ENCODE measurements at regions of chr5 and their contacts with region 1.

Region 1: DNA sequence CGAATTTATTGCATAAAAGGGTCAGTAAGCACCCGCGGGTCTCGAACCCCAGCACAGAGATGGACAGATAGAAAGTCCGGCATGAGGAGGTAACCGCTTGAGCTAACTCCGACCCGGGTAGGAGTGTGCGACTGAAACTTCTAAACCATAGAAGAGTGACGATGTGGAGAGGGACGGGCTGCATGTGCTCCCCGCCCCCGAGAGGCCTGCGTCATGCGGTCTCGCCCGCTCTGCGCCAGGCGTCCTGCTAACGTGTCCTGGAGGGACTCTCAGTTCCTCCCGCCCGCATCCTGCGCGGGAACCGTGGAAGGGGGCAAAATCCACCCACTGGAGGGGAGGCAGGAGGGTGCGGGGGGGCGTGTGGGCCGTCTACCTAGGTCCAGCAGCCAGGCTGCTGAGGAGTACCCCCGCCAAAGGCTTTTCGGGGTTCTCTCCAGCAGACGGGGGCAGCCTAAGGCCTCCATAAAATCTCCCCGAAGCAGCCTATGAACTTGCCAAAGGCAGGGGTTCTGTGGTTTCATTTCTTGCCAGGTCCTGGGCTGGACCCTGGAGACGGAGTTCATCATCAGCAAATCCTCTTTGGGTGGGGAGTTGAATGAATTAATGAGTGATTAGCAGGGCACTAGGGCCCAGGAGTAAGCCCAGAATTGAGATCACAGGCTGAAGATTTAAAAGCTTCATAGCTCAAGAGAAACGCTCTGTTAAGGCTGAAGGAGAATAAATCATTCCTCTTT is 51.9 kb downstream of the TGFBI start:
- DNase-seq: peak; percentile 82
- ATAC-seq: peak; percentile 89
- H3K4me3 ChIP-seq: peak overlapping the region; percentile 62; the same call in 1 of the 2 replicates
- H3K27ac ChIP-seq: no peak overlapping the region
- H3K4me1 ChIP-seq: no peaks in the 10 kb centered on the region; the same call in 1 of the 2 replicates
- H3K27me3 ChIP-seq: peaks cover 0 to 2% of the 10 kb centered on the region in 2 experiments; a peak in 2 of 4 replicates
- CTCF ChIP-seq: no peak
- EP300 ChIP-seq: peak in 1 of 2 experiments; percentile 70; a peak in 3 of 4 replicates
- POLR2A ChIP-seq: peak; percentile 60; the same call in 1 of the 2 replicates
- RAD21 ChIP-seq: no peak

Region 2: GRCh38 chr5:135944967-135945560 is 135.6 kb before region 1 on chr5:
- CTCF ChIA-PET with region 1: interaction called, 22 read pairs
- POLR2A ChIA-PET with region 1: no interaction called
- RAD21 ChIA-PET with region 1: interaction called, 3 read pairs
- SMC1A ChIA-PET with region 1: interaction called, 10 read pairs
- in situ Hi-C with region 1: no loop called
- intact Hi-C with region 1: loop called (anchors 1 kb)
- DNase-seq: no peak
- ATAC-seq: peak; percentile 70
- H3K4me3 ChIP-seq: no peak overlapping the region
- H3K27ac ChIP-seq: no peak overlapping the region
- H3K4me1 ChIP-seq: no peaks in the 10 kb centered on the region
- H3K27me3 ChIP-seq: no peaks in the 10 kb centered on the region; a peak in 2 of 4 replicates
- CTCF ChIP-seq: peak; percentile 60 to 77 (median 66)
- EP300 ChIP-seq: no peak
- POLR2A ChIP-seq: no peak
- RAD21 ChIP-seq: peak; percentile 74

Region 3: DNA sequence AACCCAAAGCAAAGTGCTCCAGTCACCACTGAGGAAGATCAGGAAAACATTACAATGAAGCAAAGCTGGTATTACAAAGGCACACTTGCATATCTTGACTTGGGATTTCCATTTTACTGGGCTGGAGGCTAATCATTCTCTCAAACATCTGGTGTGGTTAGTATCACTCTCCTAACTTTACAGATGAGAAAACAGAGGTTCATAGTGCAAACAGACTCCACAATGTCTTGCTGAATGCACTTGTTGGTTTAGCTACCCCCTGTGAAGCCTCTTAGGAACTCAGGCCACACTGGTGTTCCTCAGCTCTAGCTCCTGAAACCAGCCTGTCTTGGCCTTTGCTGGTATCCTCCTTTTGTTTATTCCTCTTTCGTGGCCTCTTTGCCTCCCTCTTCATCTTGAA is 22.5 kb after region 1 on chr5:
- CTCF ChIA-PET with region 1: interaction called, 15 read pairs
- POLR2A ChIA-PET with region 1: interaction called, 3 read pairs
- RAD21 ChIA-PET with region 1: interaction called, 18 read pairs
- SMC1A ChIA-PET with region 1: interaction called, 17 read pairs
- in situ Hi-C with region 1: no loop called
- intact Hi-C with region 1: no loop called
- DNase-seq: no peak
- ATAC-seq: peak; percentile 72
- H3K4me3 ChIP-seq: no peak overlapping the region
- H3K27ac ChIP-seq: no peak overlapping the region
- H3K4me1 ChIP-seq: no peaks in the 10 kb centered on the region
- H3K27me3 ChIP-seq: no peaks in the 10 kb centered on the region
- CTCF ChIP-seq: no peak
- EP300 ChIP-seq: no peak
- POLR2A ChIP-seq: no peak
- RAD21 ChIP-seq: no peak

Region 4: DNA sequence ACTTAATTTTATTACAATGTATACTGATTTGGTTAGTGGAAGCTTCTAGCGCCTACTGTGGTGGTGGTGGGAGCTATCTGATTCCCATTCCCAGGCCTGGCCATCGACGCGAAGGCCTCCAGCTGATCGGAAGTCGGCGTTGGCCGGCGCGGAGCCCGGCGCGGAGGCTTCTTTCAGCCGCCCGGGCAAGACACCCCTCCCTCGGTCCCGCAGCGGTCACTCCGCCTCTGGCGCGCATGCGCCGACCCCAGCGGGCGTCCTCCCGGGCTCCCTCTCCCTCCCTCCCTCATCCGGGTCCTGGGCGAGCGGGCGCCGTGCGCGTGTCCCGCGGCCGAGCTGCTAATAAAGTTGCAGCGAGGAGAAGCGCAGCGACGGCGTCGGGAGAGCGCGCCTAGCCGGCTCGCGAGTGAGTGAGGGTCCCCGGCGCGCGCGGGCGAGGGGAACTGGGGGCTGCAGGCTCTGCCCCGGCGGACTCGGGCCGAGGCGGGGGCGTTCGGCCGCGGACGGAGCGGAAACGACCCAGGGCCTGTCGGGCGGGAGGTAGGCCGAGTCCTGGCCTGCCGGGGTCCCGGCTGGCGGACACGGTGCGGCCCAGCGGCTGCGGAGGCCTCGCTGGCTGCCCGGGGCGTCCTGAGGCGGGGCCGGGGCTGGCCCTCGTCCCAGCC is 52.0 kb after region 1 on chr5 and contains the start of gene SMAD5:
- CTCF ChIA-PET with region 1: interaction called, 8 read pairs
- POLR2A ChIA-PET with region 1: interaction called, 8 read pairs
- RAD21 ChIA-PET with region 1: interaction called, 19 read pairs
- SMC1A ChIA-PET with region 1: interaction called, 29 read pairs
- in situ Hi-C with region 1: no loop called
- intact Hi-C with region 1: loop called (anchors 5 kb)
- DNase-seq: peak; percentile 65
- ATAC-seq: peak; percentile 95
- H3K4me3 ChIP-seq: peak within 1 kb of the TSS; percentile 76
- H3K27ac ChIP-seq: peak within 1 kb of the TSS; percentile 54; the same call in 1 of the 2 replicates
- H3K4me1 ChIP-seq: peaks cover 3% of the 10 kb centered on the region
- H3K27me3 ChIP-seq: peaks cover 0 to 3% of the 10 kb centered on the region in 2 experiments; a peak in 1 of 4 replicates
- CTCF ChIP-seq: no peak
- EP300 ChIP-seq: no peak
- POLR2A ChIP-seq: peak; percentile 88
- RAD21 ChIP-seq: no peak
- polyA plus RNA-seq, gene SMAD5: 3.6 to 7.1 TPM

Region 5: GRCh38 chr5:136212252-136212721 is 131.6 kb after region 1 on chr5:
- CTCF ChIA-PET with region 1: interaction called, 3 read pairs
- POLR2A ChIA-PET with region 1: no interaction called
- RAD21 ChIA-PET with region 1: no interaction called
- SMC1A ChIA-PET with region 1: interaction called, 4 read pairs
- in situ Hi-C with region 1: no loop called
- intact Hi-C with region 1: loop called (anchors 5 kb)
- DNase-seq: no peak
- ATAC-seq: peak; percentile 85
- H3K4me3 ChIP-seq: no peak overlapping the region
- H3K27ac ChIP-seq: no peak overlapping the region
- H3K4me1 ChIP-seq: no peaks in the 10 kb centered on the region
- H3K27me3 ChIP-seq: peaks cover 0 to 3% of the 10 kb centered on the region in 2 experiments; a peak in 2 of 4 replicates
- CTCF ChIP-seq: peak; percentile 81 to 87 (median 81)
- EP300 ChIP-seq: no peak
- POLR2A ChIP-seq: no peak
- RAD21 ChIP-seq: peak; percentile 79